ENCODE measurements at regions of chr2 and their contacts with region 1.

Region 1: DNA sequence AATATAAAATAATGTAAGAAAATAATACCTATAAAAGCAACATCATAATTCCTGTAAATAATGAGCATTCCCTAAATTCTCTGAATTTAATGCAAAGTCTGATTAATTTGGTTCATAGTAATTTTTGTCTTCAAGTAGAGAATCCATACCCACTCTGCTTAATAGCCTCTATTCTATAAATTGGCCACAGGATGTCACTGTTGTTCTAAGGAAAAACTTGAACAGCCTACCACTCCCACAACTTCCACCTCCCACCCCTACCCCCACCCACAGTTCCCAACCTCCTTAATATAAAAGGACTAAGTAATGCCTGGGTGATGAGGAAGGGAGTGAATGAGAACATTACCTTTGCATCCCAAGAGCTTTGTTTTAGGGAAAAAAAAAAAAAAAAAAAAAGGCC is 27.2 kb upstream of the BBS5 start:
- DNase-seq: peak; percentile 46 to 68 (median 60)
- H3K4me3 ChIP-seq: no peak overlapping the region
- H3K27ac ChIP-seq: no peak overlapping the region
- H3K4me1 ChIP-seq: no peaks in the 10 kb centered on the region
- H3K27me3 ChIP-seq: no peaks in the 10 kb centered on the region

Region 2: DNA sequence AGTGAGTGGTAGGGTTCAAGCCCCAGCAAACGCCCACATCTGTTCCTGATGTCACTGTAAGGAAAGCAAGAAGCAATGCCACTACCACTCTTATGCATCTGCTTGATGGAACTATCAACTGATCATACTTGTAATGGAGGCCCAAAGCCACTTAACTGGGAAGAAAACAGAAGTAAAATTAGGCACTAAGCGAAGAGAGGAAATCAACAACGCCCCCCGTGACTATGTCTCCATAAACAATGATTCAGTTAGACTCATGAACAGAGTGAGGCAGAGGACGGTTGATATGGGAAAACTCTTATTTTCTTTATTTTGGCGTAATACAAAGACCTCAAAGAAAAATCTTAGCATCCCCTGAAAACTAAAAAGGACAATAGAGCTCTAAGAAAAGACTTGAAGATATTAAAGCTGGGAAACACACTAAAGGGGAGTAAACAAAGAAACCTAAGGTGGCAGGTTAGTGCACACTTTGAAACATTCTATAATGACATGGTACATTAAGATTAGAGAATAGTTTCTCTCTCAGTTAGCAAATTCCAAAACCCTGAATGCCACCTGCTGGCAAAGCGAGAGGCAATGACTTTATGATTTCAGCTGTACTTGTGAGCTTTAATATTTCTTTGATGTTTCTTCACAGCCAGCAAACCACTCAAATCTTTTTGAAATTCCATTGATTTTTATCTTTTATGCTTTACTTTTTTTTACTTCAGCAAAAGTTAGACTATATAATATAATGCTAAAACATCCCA is 176.2 kb before region 1 on chr2:
- CTCF ChIA-PET with region 1: no interaction called
- POLR2A ChIA-PET with region 1: no interaction called
- DNase-seq: peak; percentile 38 to 65 (median 59)
- H3K4me3 ChIP-seq: no peak overlapping the region
- H3K27ac ChIP-seq: no peak overlapping the region
- H3K4me1 ChIP-seq: peaks cover 0 to 6% (median 0%) of the 10 kb centered on the region in 4 experiments
- H3K27me3 ChIP-seq: no peaks in the 10 kb centered on the region

Region 3: GRCh38 chr2:169462896-169463695 is 11.0 kb after region 1 on chr2:
- CTCF ChIA-PET with region 1: interaction called, 10 read pairs
- POLR2A ChIA-PET with region 1: no interaction called
- DNase-seq: no peak
- H3K4me3 ChIP-seq: no peak overlapping the region
- H3K27ac ChIP-seq: no peak overlapping the region
- H3K4me1 ChIP-seq: no peaks in the 10 kb centered on the region
- H3K27me3 ChIP-seq: no peaks in the 10 kb centered on the region

Measured in common myeloid progenitor, CD34-positive (primary cell).